ENCODE measurements at regions of chr2 and their contacts with region 1.

Region 1: GRCh38 chr2:67215214-67216055 is 181.7 kb upstream of the ETAA1 start:
- DNase-seq: peak; percentile 80 to 89 (median 86)
- ATAC-seq: peak; percentile 86 to 95 (median 94)
- H3K4me3 ChIP-seq: peak overlapping the region; percentile 21 to 56 (median 48)
- H3K27ac ChIP-seq: peak overlapping the region; percentile 54 to 92 (median 79)
- H3K4me1 ChIP-seq: peaks cover 13 to 38% (median 23%) of the 10 kb centered on the region in 3 donors
- H3K27me3 ChIP-seq: no peaks in the 10 kb centered on the region
- CTCF ChIP-seq: peak; percentile 52 to 57 (median 54)

Region 2: DNA sequence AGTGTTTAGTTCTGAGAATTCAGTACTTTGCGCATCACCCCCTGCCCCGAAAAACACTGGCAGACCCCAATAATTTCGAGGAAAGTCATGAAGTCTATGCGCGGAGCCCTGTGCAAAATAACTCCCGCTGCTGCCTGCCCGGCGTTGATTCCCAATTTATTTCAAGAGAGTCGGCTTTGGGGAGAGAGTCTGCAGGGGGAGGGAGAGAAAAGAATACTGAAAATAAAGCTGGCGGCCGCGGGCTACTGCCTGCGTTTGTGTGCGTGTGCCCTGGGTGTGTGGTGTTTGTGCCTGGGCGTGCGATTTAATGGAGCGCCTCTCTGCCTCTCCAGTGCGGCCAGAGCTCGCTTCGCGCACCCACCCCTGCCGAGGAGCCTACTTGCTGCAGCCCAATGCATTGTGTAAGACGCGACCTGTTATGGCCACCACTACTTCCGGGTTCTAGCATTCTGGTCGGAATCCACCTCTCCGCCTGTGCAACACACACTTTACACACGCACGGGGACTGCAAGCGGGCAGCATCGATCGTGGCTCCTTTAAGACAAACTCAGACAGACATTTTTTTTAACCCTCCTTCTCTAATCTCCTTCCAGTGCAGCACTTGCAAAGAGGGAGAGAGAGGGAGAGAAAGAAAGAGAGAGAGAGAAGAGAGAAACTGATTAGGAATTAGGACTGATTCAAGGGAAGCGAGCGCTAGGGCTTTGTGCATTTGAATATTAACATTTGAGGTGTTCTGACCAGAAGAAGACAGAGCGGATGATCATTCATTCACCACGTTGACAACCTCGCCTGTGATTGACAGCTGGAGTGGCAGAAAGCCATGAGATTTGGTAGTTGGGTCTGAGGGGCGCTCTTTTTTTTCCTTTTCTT is 780.5 kb before region 1 on chr2 and contains the start of gene MEIS1:
- intact Hi-C with region 1: loop called in 1 of 3 experiments (anchors 10 kb)
- DNase-seq: peak; percentile 88 to 96 (median 96)
- ATAC-seq: peak; percentile 73 to 83 (median 78)
- H3K4me3 ChIP-seq: peak within 1 kb of the TSS; percentile 43 to 74 (median 66)
- H3K27ac ChIP-seq: peak within 1 kb of the TSS; percentile 87 to 99 (median 92)
- H3K4me1 ChIP-seq: peaks cover 0 to 5% (median 0%) of the 10 kb centered on the region in 3 donors
- H3K27me3 ChIP-seq: no peaks in the 10 kb centered on the region
- CTCF ChIP-seq: no peak
- total RNA-seq, gene MEIS1: 48.6 to 129 (median 60.3) TPM

Region 3: GRCh38 chr2:66845307-66845706 is 370.1 kb before region 1 on chr2:
- intact Hi-C with region 1: loop called in 1 of 3 experiments (anchors 5 kb)
- DNase-seq: no peak
- ATAC-seq: no peak
- H3K4me3 ChIP-seq: no peak overlapping the region
- H3K27ac ChIP-seq: no peak overlapping the region
- H3K4me1 ChIP-seq: peaks cover 14 to 35% (median 28%) of the 10 kb centered on the region in 3 donors
- H3K27me3 ChIP-seq: no peaks in the 10 kb centered on the region
- CTCF ChIP-seq: no peak

Region 4: GRCh38 chr2:67037655-67038054 is 177.8 kb before region 1 on chr2:
- intact Hi-C with region 1: loop called in 1 of 3 experiments (anchors 5 kb)
- DNase-seq: peak in 4 of 6 donors; percentile 53 to 89 (median 86)
- ATAC-seq: peak; percentile 67 to 80 (median 72)
- H3K4me3 ChIP-seq: no peak overlapping the region
- H3K27ac ChIP-seq: peak overlapping the region; percentile 69 to 88 (median 87)
- H3K4me1 ChIP-seq: peaks cover 34 to 77% (median 74%) of the 10 kb centered on the region in 3 donors
- H3K27me3 ChIP-seq: no peaks in the 10 kb centered on the region
- CTCF ChIP-seq: no peak

Region 5: GRCh38 chr2:67760995-67761394 is 545.6 kb after region 1 on chr2:
- intact Hi-C with region 1: no loop called
- DNase-seq: no peak
- ATAC-seq: no peak
- H3K4me3 ChIP-seq: no peak overlapping the region
- H3K27ac ChIP-seq: no peak overlapping the region
- H3K4me1 ChIP-seq: no peaks in the 10 kb centered on the region
- H3K27me3 ChIP-seq: no peaks in the 10 kb centered on the region
- CTCF ChIP-seq: no peak